ENCODE measurements at regions of chr2 and their contacts with region 1.

Region 1: GRCh38 chr2:30711646-30712085 is 95.6 kb downstream of the CAPN13 start:
- DNase-seq: peak; percentile 89 to 90
- ATAC-seq: peak; percentile 89
- H3K4me3 ChIP-seq: no peak overlapping the region
- H3K27ac ChIP-seq: no peak overlapping the region
- H3K4me1 ChIP-seq: no peaks in the 10 kb centered on the region
- H3K27me3 ChIP-seq: no peaks in the 10 kb centered on the region

Region 2: DNA sequence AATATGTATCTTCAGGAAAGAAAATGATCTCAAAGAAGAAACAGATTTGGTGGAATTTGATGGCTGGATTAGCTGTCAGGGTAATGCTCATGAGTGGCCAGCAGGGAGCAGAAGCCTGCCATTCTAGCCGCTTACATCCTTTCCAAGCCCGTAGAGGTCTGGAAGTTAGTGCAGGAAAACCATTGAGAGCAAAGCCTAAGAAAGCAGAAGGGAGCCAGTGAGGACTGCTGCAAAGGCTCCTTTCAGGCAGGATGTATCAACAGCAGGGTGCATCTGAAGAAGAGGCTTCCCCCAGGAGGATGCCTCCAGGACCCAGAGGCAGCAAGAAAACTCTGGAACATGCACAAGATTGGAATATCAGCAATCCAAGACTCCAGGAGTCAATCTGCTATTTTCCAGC is 503.2 kb before region 1 on chr2:
- intact Hi-C with region 1: loop called (anchors 1 to 2 kb)
- DNase-seq: no peak
- ATAC-seq: peak; percentile 90
- H3K4me3 ChIP-seq: no peak overlapping the region
- H3K27ac ChIP-seq: no peak overlapping the region
- H3K4me1 ChIP-seq: no peaks in the 10 kb centered on the region
- H3K27me3 ChIP-seq: no peaks in the 10 kb centered on the region

Region 3: GRCh38 chr2:30481323-30481800 is 230.3 kb before region 1 on chr2:
- intact Hi-C with region 1: loop called (anchors 10 kb)
- DNase-seq: peak in 1 of 2 donors; percentile 80
- ATAC-seq: no peak
- H3K4me3 ChIP-seq: no peak overlapping the region
- H3K27ac ChIP-seq: peak overlapping the region in 1 of 2 donors; percentile 1
- H3K4me1 ChIP-seq: peaks cover 5 to 7% of the 10 kb centered on the region in 2 donors
- H3K27me3 ChIP-seq: no peaks in the 10 kb centered on the region

Region 4: GRCh38 chr2:31049916-31050588 is 338.4 kb after region 1 on chr2:
- intact Hi-C with region 1: no loop called
- DNase-seq: no peak
- ATAC-seq: no peak
- H3K4me3 ChIP-seq: no peak overlapping the region
- H3K27ac ChIP-seq: no peak overlapping the region
- H3K4me1 ChIP-seq: no peaks in the 10 kb centered on the region
- H3K27me3 ChIP-seq: no peaks in the 10 kb centered on the region

Region 5: GRCh38 chr2:31333527-31334183 is 622.0 kb after region 1 on chr2:
- intact Hi-C with region 1: loop called (anchors 5 kb)
- DNase-seq: peak; percentile 84 to 91
- ATAC-seq: peak; percentile 79
- H3K4me3 ChIP-seq: no peak overlapping the region
- H3K27ac ChIP-seq: no peak overlapping the region
- H3K4me1 ChIP-seq: no peaks in the 10 kb centered on the region
- H3K27me3 ChIP-seq: no peaks in the 10 kb centered on the region